ENCODE measurements at regions of chr6 and their contacts with region 1.

Region 1: GRCh38 chr6:122184401-122184827 is 215.0 kb upstream of the HSF2 start:
- DNase-seq: no peak
- ATAC-seq: peak; percentile 72

Region 2: DNA sequence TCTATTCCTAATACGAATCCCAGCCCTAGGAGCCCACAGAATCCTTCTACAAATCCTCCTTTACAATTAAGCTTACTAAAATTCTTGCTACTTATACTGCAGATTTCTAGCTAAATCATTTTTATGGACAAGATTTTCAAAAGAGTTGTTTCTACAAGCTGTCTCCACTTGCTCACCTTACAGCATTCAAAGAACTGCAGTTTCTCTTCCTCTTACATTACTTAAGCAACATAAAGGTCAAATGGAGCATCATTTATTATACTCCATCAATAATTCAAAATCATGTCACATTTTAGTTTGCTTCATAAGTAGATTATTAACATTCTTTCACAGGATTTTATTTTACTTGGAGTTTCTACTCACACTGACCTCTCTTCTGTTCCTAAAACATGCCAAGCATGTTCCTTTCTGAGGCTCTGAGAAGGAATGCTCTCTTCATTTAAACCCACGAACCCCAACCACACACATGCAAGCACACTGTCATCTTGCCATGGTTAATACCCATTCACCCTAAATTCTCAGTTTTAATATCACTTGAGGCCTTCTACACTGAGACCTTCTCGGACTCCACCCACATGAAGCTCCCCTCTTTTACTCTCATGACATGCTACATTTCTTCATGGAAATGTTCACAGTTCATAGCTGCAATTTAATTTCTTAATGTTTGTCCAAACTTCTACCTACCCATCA is 1238.4 kb before region 1 on chr6:
- intact Hi-C with region 1: no loop called
- DNase-seq: no peak
- ATAC-seq: no peak

Region 3: DNA sequence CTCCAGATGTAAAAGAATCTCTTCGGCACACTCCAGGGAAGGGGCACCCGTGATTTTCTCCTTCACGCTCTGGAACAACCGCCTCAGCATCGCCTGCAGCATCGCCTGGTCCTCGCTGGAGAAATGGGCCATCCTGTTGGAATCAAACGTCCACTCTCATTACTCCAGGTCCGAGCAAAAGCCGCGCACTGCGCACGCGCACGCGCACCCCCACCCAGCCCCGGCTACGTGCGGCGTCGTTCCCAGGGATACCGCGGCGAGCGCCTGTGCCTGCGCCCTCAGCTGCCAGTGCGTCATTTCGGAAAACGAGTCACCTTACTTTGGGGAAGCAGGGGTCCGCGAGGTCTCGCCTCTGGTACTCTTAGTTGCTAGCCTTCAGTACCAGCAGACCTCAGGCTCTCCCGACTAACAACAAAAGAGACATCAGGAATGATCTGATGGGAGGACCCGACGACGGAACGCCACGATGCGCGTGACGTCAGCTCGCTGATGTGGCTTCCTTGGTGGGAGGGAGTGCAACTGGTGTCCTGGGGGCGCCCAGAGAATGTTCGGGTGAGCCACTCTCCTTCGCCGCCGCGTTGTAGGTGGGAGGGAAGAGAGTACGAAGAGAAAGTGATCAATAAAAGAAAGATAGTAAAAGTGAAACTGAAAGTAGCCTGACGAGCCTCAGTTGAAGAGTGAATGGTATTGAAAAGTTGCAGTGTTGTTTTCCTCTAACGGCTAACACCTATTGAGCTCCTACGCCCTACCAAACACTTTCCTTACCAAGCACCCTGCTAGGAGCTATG is 849.9 kb before region 1 on chr6 and contains the start of gene TBC1D32:
- intact Hi-C with region 1: loop called (anchors 10 kb)
- DNase-seq: peak; percentile 94
- ATAC-seq: peak; percentile 100
- total RNA-seq, gene TBC1D32: 3.1 TPM

Region 4: DNA sequence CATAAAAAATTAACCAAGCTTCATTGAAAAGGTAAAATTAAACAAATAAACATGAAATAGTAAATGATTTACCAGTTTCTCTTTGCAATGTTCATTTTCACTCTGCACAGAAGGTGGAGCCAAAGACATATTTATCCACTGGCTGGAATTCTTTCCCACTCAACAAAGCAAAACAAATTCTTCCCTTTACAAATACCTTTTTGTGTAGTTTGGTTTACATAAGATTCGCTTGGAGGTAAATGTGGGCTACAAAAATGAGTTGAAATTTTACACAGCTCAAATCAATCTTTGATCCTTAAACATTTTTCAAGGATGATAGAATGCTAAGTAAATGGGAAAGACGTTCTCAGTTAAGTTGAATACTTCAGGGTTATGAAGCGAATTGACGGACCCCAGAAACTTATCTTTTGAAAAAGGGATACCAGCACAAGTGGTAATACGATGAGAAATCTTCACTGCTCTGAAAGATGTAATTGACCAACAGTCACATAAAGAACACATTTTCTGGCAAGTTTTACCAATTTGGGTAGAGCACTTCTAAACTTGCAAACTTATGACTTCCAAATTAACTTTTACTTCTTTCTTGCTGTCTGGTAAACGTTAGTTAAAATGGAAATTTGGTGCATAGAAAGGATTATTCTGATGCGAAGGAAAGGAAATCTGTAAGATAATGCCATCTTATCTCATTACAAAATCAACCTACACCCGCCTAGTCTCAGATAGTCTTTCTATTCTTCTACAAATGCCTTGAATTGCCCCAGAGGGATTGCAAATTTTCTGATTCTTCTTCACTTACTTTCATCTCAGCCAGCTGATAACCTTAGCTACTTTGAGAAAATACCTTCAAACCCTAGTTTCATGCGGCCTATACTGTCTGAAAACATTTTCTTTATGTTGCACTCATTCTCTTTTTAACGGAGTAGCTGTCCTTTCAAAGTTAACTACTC is 753.6 kb before region 1 on chr6:
- intact Hi-C with region 1: loop called (anchors 1 kb)
- DNase-seq: no peak
- ATAC-seq: no peak

Region 5: DNA sequence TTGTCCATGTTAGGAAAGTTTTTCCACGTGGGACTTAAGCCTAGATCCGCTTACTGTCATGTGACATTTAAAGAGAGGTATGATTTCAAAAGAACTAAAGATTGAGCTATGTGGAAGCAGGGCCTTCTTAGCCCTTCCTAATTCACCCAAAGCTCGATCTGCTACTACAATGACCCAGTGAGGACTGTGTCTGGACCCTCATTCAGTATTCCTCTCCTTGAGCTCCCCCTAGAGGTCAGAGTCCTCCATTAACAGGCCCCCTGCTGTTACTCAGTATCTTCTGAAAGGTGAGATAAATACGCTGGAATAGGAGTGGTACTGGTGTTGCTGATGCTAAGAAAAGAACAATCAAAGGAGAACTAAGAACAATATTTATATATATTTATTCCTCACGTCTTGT is 334.9 kb before region 1 on chr6:
- intact Hi-C with region 1: loop called (anchors 5 kb)
- DNase-seq: no peak
- ATAC-seq: peak; percentile 78

Region 6: GRCh38 chr6:122008101-122008999 is 176.1 kb before region 1 on chr6:
- intact Hi-C with region 1: loop called (anchors 5 kb)
- DNase-seq: no peak
- ATAC-seq: peak; percentile 97

Region 7: GRCh38 chr6:122033539-122034181 is 150.8 kb before region 1 on chr6:
- intact Hi-C with region 1: loop called (anchors 5 kb)
- DNase-seq: no peak
- ATAC-seq: peak; percentile 87

Measured in Right ventricle myocardium inferior (tissue), 1 donor.